Naive thymus-derived CD4-positive, alpha-beta T cell (primary cell): ENCODE measurements at regions of chr16 and their contacts with region 1.

Region 1: DNA sequence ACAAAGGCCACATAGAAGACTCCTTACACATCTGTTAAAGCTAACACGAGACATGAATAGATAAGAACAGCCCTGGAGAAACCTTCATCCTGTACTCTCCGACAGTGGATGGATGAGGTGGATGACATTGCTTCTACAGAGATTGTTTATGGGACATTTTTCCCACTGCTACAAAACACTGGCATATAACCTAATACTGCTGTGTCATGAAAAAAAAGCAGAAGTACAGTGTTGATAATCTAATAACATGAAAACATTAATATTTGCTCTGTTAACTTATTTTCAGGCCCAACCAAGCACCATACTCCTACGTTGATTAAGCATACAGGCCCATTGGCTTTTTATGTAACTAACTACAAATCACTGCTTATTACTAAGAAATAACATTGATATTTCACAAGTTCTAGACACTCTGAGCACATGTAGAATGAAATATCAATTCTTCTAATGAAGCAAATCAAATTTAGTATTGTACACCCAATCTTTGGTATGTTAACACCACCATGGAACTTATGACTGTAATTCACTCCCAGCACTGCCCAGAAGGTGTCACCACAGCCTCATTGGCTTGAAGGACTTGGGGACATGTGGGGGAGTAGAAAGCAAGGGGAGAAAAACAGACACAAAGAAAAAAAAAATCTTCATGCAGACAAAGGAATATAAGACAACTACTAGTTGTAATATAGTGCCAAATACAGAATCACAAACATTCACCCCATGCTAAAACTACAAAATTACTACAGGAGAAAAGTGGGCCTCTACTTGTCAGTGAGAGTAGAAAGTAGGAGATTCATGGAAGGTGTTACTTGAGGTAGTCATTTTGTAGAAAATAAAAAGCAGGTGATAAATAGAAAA is 330.0 kb upstream of the PMFBP1 start:
- DNase-seq: peak in 4 of 9 donors; percentile 2 to 20 (median 3)
- ATAC-seq: no peak
- H3K4me3 ChIP-seq: no peak overlapping the region
- H3K4me3 Mint-ChIP-seq: no peak overlapping the region
- H3K27ac ChIP-seq: no peak overlapping the region
- H3K27ac Mint-ChIP-seq: no peak overlapping the region
- H3K4me1 ChIP-seq: no peaks in the 10 kb centered on the region
- H3K4me1 Mint-ChIP-seq: peaks cover 0 to 6% (median 4%) of the 10 kb centered on the region in 7 donors
- H3K27me3 ChIP-seq: no peaks in the 10 kb centered on the region
- H3K27me3 Mint-ChIP-seq: no peaks in the 10 kb centered on the region

Region 2: GRCh38 chr16:72434159-72434558 is 67.8 kb before region 1 on chr16:
- CTCF ChIA-PET with region 1: no interaction called
- POLR2A ChIA-PET with region 1: no interaction called
- intact Hi-C with region 1: no loop called
- DNase-seq: no peak
- ATAC-seq: no peak
- H3K4me3 ChIP-seq: no peak overlapping the region
- H3K4me3 Mint-ChIP-seq: no peak overlapping the region
- H3K27ac ChIP-seq: no peak overlapping the region
- H3K27ac Mint-ChIP-seq: no peak overlapping the region
- H3K4me1 ChIP-seq: no peaks in the 10 kb centered on the region
- H3K4me1 Mint-ChIP-seq: no peaks in the 10 kb centered on the region
- H3K27me3 ChIP-seq: no peaks in the 10 kb centered on the region
- H3K27me3 Mint-ChIP-seq: peaks cover 0 to 4% (median 0%) of the 10 kb centered on the region in 5 donors

Region 3: GRCh38 chr16:72856797-72857196 is 354.8 kb after region 1 on chr16:
- CTCF ChIA-PET with region 1: no interaction called
- POLR2A ChIA-PET with region 1: no interaction called
- intact Hi-C with region 1: loop called in 1 of 2 experiments (anchors 5 kb)
- DNase-seq: no peak
- ATAC-seq: no peak
- H3K4me3 ChIP-seq: no peak overlapping the region
- H3K4me3 Mint-ChIP-seq: no peak overlapping the region
- H3K27ac ChIP-seq: no peak overlapping the region
- H3K27ac Mint-ChIP-seq: no peak overlapping the region
- H3K4me1 ChIP-seq: no peaks in the 10 kb centered on the region
- H3K4me1 Mint-ChIP-seq: peaks cover 0 to 19% (median 5%) of the 10 kb centered on the region in 7 donors
- H3K27me3 ChIP-seq: peaks cover 0 to 2% of the 10 kb centered on the region in 2 donors
- H3K27me3 Mint-ChIP-seq: peaks cover 0 to 31% (median 4%) of the 10 kb centered on the region in 5 donors

Region 4: DNA sequence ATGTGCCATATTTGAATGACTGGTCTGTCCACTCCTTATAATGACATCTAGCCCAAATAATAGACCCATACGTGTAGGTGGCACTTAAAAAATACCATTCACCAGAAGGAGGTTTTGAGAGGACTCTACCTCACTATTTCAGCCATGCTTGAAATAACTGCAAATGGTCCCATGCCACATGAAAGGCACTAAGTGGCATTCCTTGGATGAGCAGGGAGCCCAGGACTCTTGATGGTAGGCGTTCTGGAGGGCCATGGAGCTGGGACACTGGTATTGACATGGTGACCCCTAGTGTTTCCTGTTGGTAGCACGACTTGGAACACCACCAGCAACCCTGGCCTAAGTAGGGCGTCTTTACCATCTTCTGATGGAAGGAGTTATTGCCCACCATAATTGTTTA is 694.7 kb after region 1 on chr16:
- CTCF ChIA-PET with region 1: no interaction called
- POLR2A ChIA-PET with region 1: no interaction called
- intact Hi-C with region 1: loop called in 1 of 2 experiments (anchors 2 kb)
- DNase-seq: peak in 2 of 9 donors; percentile 16 to 20
- ATAC-seq: peak; percentile 75
- H3K4me3 ChIP-seq: no peak overlapping the region
- H3K4me3 Mint-ChIP-seq: no peak overlapping the region
- H3K27ac ChIP-seq: no peak overlapping the region
- H3K27ac Mint-ChIP-seq: no peak overlapping the region
- H3K4me1 ChIP-seq: no peaks in the 10 kb centered on the region
- H3K4me1 Mint-ChIP-seq: no peaks in the 10 kb centered on the region
- H3K27me3 ChIP-seq: no peaks in the 10 kb centered on the region
- H3K27me3 Mint-ChIP-seq: peaks cover 0 to 2% (median 0%) of the 10 kb centered on the region in 5 donors

Region 5: DNA sequence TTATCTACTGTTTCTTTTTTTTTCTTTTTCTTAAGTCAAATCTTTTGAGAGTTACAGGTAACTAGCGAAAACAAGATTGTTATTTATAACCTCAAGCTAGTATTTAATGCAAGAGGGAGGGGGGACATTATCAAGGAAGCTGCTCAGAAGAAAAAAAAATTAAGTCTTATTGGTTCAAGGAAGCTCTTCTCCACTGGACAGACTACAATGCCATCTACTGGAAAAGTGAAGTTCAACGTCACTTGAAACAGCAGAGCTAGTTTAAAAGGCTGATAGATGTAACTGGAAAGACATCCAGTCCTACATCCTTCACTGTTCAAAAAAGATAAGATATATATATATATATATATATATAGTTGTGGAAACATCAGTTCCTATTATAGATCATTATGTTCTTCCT is 1376.6 kb after region 1 on chr16:
- CTCF ChIA-PET with region 1: no interaction called
- POLR2A ChIA-PET with region 1: no interaction called
- intact Hi-C with region 1: loop called in 1 of 2 experiments (anchors 5 kb)
- DNase-seq: no peak
- ATAC-seq: no peak
- H3K4me3 ChIP-seq: no peak overlapping the region
- H3K4me3 Mint-ChIP-seq: no peak overlapping the region
- H3K27ac ChIP-seq: no peak overlapping the region
- H3K27ac Mint-ChIP-seq: no peak overlapping the region
- H3K4me1 ChIP-seq: no peaks in the 10 kb centered on the region
- H3K4me1 Mint-ChIP-seq: no peaks in the 10 kb centered on the region
- H3K27me3 ChIP-seq: no peaks in the 10 kb centered on the region
- H3K27me3 Mint-ChIP-seq: peaks cover 0 to 13% (median 7%) of the 10 kb centered on the region in 5 donors